ENCODE measurements at regions of chr5 and their contacts with region 1.

Region 1: GRCh38 chr5:33409435-33410170 is 31.2 kb upstream of the TARS1 start:
- DNase-seq: peak; percentile 96
- H3K4me3 ChIP-seq: no peak overlapping the region
- H3K27ac ChIP-seq: peak overlapping the region; percentile 39 to 78 (median 75)
- H3K4me1 ChIP-seq: peaks cover 0 to 65% (median 39%) of the 10 kb centered on the region in 4 donors
- H3K27me3 ChIP-seq: no peaks in the 10 kb centered on the region
- CTCF ChIP-seq: no peak
- EP300 ChIP-seq: peak; percentile 21 to 90 (median 72)
- POLR2A ChIP-seq: no peak

Region 2: GRCh38 chr5:32975656-32976375 is 433.8 kb before region 1 on chr5:
- intact Hi-C with region 1: no loop called
- DNase-seq: no peak
- H3K4me3 ChIP-seq: no peak overlapping the region
- H3K27ac ChIP-seq: peak overlapping the region in 3 of 4 donors; percentile 30 to 46 (median 36)
- H3K4me1 ChIP-seq: peaks cover 0 to 36% (median 29%) of the 10 kb centered on the region in 4 donors
- H3K27me3 ChIP-seq: no peaks in the 10 kb centered on the region
- CTCF ChIP-seq: no peak
- EP300 ChIP-seq: no peak
- POLR2A ChIP-seq: no peak

Region 3: GRCh38 chr5:33235824-33236223 is 173.8 kb before region 1 on chr5:
- intact Hi-C with region 1: loop called (anchors 2 kb)
- DNase-seq: no peak
- H3K4me3 ChIP-seq: no peak overlapping the region
- H3K27ac ChIP-seq: no peak overlapping the region
- H3K4me1 ChIP-seq: peaks cover 0 to 40% (median 16%) of the 10 kb centered on the region in 4 donors
- H3K27me3 ChIP-seq: no peaks in the 10 kb centered on the region
- CTCF ChIP-seq: no peak
- EP300 ChIP-seq: no peak
- POLR2A ChIP-seq: no peak

Region 4: DNA sequence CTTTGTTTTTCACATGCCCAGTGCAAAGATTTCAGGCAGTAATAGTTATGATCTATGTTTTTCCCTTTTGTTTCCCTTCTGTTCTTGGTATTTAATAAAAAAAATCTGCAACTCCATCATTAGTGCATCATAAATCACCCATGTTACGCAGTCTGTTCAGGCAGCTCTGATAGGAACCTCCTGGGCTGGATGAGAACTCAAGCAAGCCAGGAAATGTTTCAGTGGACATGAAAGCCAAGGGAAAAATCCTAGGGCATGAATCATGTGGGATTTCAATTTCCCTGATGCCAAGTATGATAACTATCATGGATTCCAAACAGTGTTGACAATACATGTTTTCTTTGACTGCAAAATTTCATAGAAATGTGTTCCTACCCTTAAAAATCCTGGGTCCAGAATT is 88.6 kb before region 1 on chr5:
- intact Hi-C with region 1: loop called (anchors 5 kb)
- DNase-seq: peak; percentile 87
- H3K4me3 ChIP-seq: no peak overlapping the region
- H3K27ac ChIP-seq: peak overlapping the region; percentile 55 to 77 (median 72)
- H3K4me1 ChIP-seq: peaks cover 0 to 50% (median 37%) of the 10 kb centered on the region in 4 donors
- H3K27me3 ChIP-seq: no peaks in the 10 kb centered on the region
- CTCF ChIP-seq: no peak
- EP300 ChIP-seq: peak in 2 of 4 donors; percentile 19 to 56
- POLR2A ChIP-seq: no peak

Region 5: DNA sequence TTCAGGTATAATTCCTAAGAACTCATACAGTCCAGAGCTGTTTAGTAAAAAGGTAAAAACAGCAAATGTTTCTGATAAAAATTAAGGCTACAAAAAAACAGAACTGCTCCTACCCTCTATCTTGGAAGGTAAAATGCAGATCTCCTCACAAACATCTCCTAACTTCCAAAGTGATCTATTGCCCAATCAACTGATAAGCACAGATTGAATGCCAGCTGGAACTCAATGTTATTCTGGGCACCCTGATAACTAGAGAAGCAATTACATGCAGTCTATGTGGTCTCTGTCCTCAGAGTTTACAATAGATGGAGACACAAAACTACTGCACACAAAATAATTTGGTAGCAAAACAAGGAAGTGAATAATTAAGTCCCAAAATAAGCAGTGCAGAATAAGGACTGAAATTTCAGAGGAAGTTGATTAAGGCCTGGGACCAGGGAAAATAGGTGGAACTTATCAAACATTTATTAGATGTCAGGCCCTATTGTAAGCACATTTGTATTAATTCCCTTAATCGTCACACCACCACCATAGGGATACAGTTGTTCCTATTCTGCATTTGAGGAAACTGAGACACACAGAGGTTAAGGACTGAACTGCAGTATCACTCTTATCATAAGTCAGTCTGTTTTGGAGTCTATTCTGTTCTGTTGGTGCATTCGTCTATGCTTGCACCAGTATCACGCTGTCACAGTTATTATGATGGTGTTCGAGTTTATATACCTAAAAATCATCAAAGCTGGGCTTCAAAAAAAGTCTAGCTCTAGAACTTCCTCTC is 71.1 kb before region 1 on chr5:
- intact Hi-C with region 1: loop called (anchors 5 kb)
- DNase-seq: no peak
- H3K4me3 ChIP-seq: no peak overlapping the region
- H3K27ac ChIP-seq: peak overlapping the region in 3 of 4 donors; percentile 65 to 76 (median 69)
- H3K4me1 ChIP-seq: peaks cover 0 to 69% (median 42%) of the 10 kb centered on the region in 4 donors
- H3K27me3 ChIP-seq: no peaks in the 10 kb centered on the region
- CTCF ChIP-seq: no peak
- EP300 ChIP-seq: no peak
- POLR2A ChIP-seq: no peak

Region 6: GRCh38 chr5:33369485-33370472 is 39.8 kb before region 1 on chr5:
- intact Hi-C with region 1: loop called (anchors 5 kb)
- DNase-seq: peak; percentile 71
- H3K4me3 ChIP-seq: no peak overlapping the region
- H3K27ac ChIP-seq: peak overlapping the region in 3 of 4 donors; percentile 70 to 82 (median 72)
- H3K4me1 ChIP-seq: peaks cover 0 to 24% (median 12%) of the 10 kb centered on the region in 4 donors
- H3K27me3 ChIP-seq: no peaks in the 10 kb centered on the region
- CTCF ChIP-seq: no peak
- EP300 ChIP-seq: peak; percentile 52 to 87 (median 62)
- POLR2A ChIP-seq: no peak

Measured in sigmoid colon (tissue), 7 donors.